Left lung (tissue), 14 donors: ENCODE measurements at regions of chr11 and their contacts with region 1.

Region 1: DNA sequence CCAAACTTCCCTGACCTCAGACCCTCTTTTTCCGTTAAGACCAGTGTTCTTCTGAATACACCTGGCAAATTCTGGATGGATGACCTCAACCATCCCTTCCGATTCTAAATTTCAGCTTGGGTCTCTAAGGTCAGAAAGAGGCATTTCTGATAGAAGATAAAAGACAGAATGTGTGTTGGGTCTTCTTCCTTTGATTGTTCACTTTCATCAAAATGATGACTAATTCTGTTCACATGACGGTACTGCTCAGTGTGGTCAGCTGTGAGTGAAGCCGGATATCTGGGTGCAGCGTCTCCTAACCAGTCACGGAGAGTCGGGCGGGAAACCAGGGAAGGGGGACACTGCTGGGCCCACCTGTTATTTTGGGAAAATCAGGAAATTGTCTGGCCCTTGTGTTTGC is 151.6 kb upstream of the NAV2 start:
- DNase-seq: no peak
- ATAC-seq: no peak
- H3K4me3 ChIP-seq: no peak overlapping the region
- H3K27ac ChIP-seq: no peak overlapping the region
- H3K4me1 ChIP-seq: peaks cover 0 to 15% of the 10 kb centered on the region in 2 donors
- H3K27me3 ChIP-seq: peaks cover 0 to 5% of the 10 kb centered on the region in 2 donors
- CTCF ChIP-seq: no peak

Region 2: GRCh38 chr11:19419021-19419750 is 141.8 kb before region 1 on chr11:
- intact Hi-C with region 1: no loop called
- DNase-seq: no peak
- ATAC-seq: peak; percentile 73
- H3K4me3 ChIP-seq: no peak overlapping the region
- H3K27ac ChIP-seq: peak overlapping the region in 1 of 2 donors; percentile 45
- H3K4me1 ChIP-seq: no peaks in the 10 kb centered on the region
- H3K27me3 ChIP-seq: no peaks in the 10 kb centered on the region
- CTCF ChIP-seq: no peak

Region 3: DNA sequence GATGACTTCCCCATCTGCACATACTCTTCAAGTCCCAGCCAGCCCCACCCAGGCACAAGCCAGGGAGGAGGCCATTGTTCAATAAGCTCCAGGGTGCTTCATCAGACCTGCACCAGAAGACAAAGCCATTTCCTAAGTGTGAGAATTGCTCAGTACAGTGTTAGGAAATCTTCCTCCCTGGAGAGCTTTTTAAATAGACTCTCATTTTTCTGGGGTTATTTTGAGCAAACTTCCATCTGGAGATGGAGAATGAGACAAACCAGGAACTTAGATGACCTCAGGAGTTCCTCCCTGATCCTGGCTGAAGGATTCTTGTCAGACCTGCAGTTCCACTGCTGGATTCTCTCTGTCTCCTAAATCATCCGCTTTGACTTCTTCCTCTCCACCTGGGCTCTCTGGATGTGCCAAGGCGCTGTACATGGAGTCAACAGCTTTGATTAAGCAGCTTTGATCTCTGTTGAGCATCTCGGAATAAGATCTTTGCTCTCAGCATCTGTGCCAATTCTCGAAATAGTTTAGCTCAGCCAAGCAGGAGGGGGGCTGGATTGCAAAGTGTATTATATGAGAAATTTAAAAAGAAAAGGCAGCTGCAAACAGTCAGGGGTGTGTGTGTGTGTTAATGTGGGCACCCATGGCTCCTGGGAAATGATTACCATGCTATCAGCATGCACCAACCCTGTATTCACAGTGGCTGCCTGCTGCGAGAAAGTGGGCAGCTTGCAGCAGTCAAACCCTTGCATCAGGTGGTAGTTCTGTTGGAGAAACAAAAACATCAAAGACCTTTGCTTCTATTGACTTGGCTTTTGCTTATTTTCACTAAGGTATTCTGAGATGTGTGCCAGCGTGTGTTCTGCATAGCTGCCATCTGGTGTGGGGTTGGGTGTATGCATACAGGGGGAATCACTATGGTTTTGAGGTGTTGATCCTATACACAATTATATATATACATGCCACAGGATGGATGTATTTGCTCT is 81.5 kb after region 1 on chr11:
- intact Hi-C with region 1: no loop called
- DNase-seq: no peak
- ATAC-seq: no peak
- H3K4me3 ChIP-seq: no peak overlapping the region
- H3K27ac ChIP-seq: no peak overlapping the region
- H3K4me1 ChIP-seq: peaks cover 0 to 6% of the 10 kb centered on the region in 2 donors
- H3K27me3 ChIP-seq: no peaks in the 10 kb centered on the region
- CTCF ChIP-seq: no peak

Region 4: GRCh38 chr11:19903620-19904069 is 342.6 kb after region 1 on chr11:
- intact Hi-C with region 1: loop called in 1 of 2 experiments (anchors 5 kb)
- DNase-seq: peak in 2 of 4 donors; percentile 70 to 85
- ATAC-seq: peak; percentile 87
- H3K4me3 ChIP-seq: no peak overlapping the region
- H3K27ac ChIP-seq: no peak overlapping the region
- H3K4me1 ChIP-seq: no peaks in the 10 kb centered on the region
- H3K27me3 ChIP-seq: no peaks in the 10 kb centered on the region
- CTCF ChIP-seq: peak; percentile 63 to 68